GM12878 (cell line): ENCODE measurements at regions of chr21 and their contacts with region 1.

Region 1: GRCh38 chr21:14737922-14738321 is 191.8 kb upstream of the SAMSN1 start:
- DNase-seq: no peak
- ATAC-seq: peak; percentile 81
- H3K4me3 ChIP-seq: no peak overlapping the region
- H3K27ac ChIP-seq: peak overlapping the region; percentile 20; the same call in 1 of the 2 replicates
- H3K4me1 ChIP-seq: peaks cover 23% of the 10 kb centered on the region
- H3K27me3 ChIP-seq: no peaks in the 10 kb centered on the region
- CTCF ChIP-seq: peak; percentile 51 to 65 (median 61)
- EP300 ChIP-seq: no peak
- POLR2A ChIP-seq: no peak
- RAD21 ChIP-seq: peak; percentile 86

Region 2: GRCh38 chr21:14438211-14438610 is 299.7 kb before region 1 on chr21:
- CTCF ChIA-PET with region 1: interaction called, 14 read pairs
- POLR2A ChIA-PET with region 1: no interaction called
- RAD21 ChIA-PET with region 1: interaction called, 4 read pairs
- SMC1A ChIA-PET with region 1: interaction called, 17 read pairs
- in situ Hi-C with region 1: no loop called
- intact Hi-C with region 1: no loop called
- DNase-seq: no peak
- ATAC-seq: no peak
- H3K4me3 ChIP-seq: no peak overlapping the region
- H3K27ac ChIP-seq: no peak overlapping the region
- H3K4me1 ChIP-seq: no peaks in the 10 kb centered on the region
- H3K27me3 ChIP-seq: no peaks in the 10 kb centered on the region
- CTCF ChIP-seq: no peak
- EP300 ChIP-seq: no peak
- POLR2A ChIP-seq: no peak
- RAD21 ChIP-seq: no peak

Region 3: GRCh38 chr21:14533504-14534428 is 204.2 kb before region 1 on chr21:
- CTCF ChIA-PET with region 1: interaction called, 9 read pairs
- POLR2A ChIA-PET with region 1: no interaction called
- RAD21 ChIA-PET with region 1: interaction called, 11 read pairs
- SMC1A ChIA-PET with region 1: interaction called, 17 read pairs
- in situ Hi-C with region 1: no loop called
- intact Hi-C with region 1: loop called (anchors 5 kb)
- DNase-seq: peak; percentile 56
- ATAC-seq: peak; percentile 89
- H3K4me3 ChIP-seq: peak overlapping the region; percentile 61; the same call in 1 of the 2 replicates
- H3K27ac ChIP-seq: peak overlapping the region; percentile 78
- H3K4me1 ChIP-seq: peaks cover 15% of the 10 kb centered on the region; the same call in 1 of the 2 replicates
- H3K27me3 ChIP-seq: no peaks in the 10 kb centered on the region
- CTCF ChIP-seq: no peak
- EP300 ChIP-seq: peak; percentile 92 to 97
- POLR2A ChIP-seq: no peak
- RAD21 ChIP-seq: no peak

Region 4: DNA sequence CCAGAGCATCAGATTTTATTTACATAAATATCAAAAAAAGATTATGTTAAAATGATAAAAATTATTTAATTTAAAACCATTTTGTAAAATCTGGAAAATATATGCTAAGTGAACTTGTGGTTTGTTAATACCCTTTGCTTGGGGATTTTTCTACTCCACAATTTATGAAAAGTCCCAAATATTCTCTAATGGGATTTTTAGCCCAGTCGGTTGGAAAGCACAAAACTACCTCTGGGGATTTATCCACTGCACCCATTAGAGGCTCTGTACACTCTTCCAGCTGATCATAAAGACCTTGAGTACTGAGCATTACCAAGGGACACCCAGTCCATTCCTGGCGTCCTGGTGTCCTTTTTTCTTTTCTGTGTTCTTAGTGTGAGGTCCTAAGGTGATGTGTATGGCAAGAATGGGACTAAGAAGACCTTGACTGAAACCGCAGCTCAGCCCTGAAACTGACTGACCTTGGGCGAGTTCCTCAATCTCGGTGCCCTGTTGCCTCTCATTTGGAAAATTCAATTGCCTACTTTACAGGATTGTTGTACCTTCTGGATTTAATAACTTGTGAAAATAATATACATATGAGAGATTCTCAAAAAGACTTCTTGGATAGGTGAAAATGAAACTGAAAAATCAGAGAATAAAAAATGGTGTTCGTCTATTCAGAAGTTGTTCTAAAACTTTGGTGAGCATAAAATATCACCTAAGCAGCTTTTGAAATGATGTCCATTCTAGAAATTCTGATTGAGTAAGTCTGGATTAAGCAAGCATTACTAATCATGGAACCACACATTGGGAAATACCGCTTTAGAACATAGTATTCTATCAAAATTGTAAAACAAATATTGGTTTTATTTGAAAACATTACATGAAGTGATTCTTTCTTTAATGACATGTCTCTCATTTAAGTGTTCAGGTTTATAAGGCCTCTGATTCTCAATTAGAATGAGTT is 170.3 kb before region 1 on chr21:
- CTCF ChIA-PET with region 1: interaction called, 8 read pairs
- POLR2A ChIA-PET with region 1: no interaction called
- RAD21 ChIA-PET with region 1: interaction called, 4 read pairs
- SMC1A ChIA-PET with region 1: interaction called, 29 read pairs
- in situ Hi-C with region 1: no loop called
- intact Hi-C with region 1: no loop called
- DNase-seq: no peak
- ATAC-seq: peak; percentile 81
- H3K4me3 ChIP-seq: peak overlapping the region; percentile 42
- H3K27ac ChIP-seq: peak overlapping the region; percentile 69
- H3K4me1 ChIP-seq: peaks cover 22% of the 10 kb centered on the region
- H3K27me3 ChIP-seq: no peaks in the 10 kb centered on the region
- CTCF ChIP-seq: no peak
- EP300 ChIP-seq: no peak
- POLR2A ChIP-seq: no peak
- RAD21 ChIP-seq: no peak

Region 5: DNA sequence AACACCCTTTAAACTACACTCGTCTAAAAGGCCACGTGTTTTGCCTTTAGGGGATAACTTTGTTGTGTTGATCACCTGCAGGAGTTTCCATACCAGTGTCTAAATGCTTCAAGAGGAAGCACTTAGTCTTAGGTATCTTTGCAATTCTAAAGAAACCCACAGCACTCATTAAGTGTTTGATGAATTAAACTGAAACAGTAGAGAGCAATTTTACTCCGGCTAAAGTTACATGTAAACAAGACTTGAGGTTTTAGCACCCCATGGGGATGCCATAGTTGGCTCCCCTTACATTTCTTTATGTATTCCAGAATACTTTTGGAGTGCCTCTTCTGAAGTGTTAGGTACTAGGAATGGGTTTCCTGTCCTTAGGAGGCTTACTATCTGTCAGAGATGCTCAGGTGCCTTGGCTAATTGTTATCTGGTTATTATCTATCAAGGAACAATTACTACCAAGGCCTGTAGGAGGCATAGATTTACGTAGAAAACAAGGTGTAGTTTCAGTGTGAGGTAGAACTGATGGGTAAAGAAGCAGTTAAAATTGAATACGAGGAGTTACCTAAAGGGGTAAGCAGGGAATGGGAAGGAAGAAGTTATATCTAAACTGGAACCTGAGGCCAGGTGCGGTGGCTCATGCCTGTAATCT is 15.0 kb before region 1 on chr21:
- CTCF ChIA-PET with region 1: interaction called, 22 read pairs
- POLR2A ChIA-PET with region 1: interaction called, 7 read pairs
- RAD21 ChIA-PET with region 1: interaction called, 11 read pairs
- SMC1A ChIA-PET with region 1: interaction called, 53 read pairs
- in situ Hi-C with region 1: no loop called
- intact Hi-C with region 1: no loop called
- DNase-seq: peak; percentile 61
- ATAC-seq: peak; percentile 96
- H3K4me3 ChIP-seq: no peak overlapping the region
- H3K27ac ChIP-seq: no peak overlapping the region
- H3K4me1 ChIP-seq: peaks cover 9% of the 10 kb centered on the region
- H3K27me3 ChIP-seq: no peaks in the 10 kb centered on the region
- CTCF ChIP-seq: no peak
- EP300 ChIP-seq: peak; percentile 20 to 38; a peak in 1 of 4 replicates
- POLR2A ChIP-seq: no peak
- RAD21 ChIP-seq: 0 out of 2 replicates have a peak, but pooled peaks have one; percentile 1

Region 6: GRCh38 chr21:14773777-14774345 is 35.9 kb after region 1 on chr21:
- CTCF ChIA-PET with region 1: interaction called, 8 read pairs
- POLR2A ChIA-PET with region 1: no interaction called
- RAD21 ChIA-PET with region 1: interaction called, 10 read pairs
- SMC1A ChIA-PET with region 1: interaction called, 27 read pairs
- in situ Hi-C with region 1: no loop called
- intact Hi-C with region 1: no loop called
- DNase-seq: no peak
- ATAC-seq: peak; percentile 78
- H3K4me3 ChIP-seq: no peak overlapping the region
- H3K27ac ChIP-seq: no peak overlapping the region
- H3K4me1 ChIP-seq: no peaks in the 10 kb centered on the region
- H3K27me3 ChIP-seq: no peaks in the 10 kb centered on the region
- CTCF ChIP-seq: peak; percentile 69 to 73 (median 72); a peak in 5 of 6 replicates
- EP300 ChIP-seq: no peak
- POLR2A ChIP-seq: no peak
- RAD21 ChIP-seq: peak; percentile 87